Endothelial cell of umbilical vein (primary cell): ENCODE measurements at regions of chr21 and their contacts with region 1.

Region 1: GRCh38 chr21:21921421-21922232 is 923.4 kb downstream of the NCAM2 start:
- DNase-seq: no peak
- H3K4me3 ChIP-seq: no peak overlapping the region
- H3K27ac ChIP-seq: no peak overlapping the region
- H3K4me1 ChIP-seq: no peaks in the 10 kb centered on the region
- H3K27me3 ChIP-seq: no peaks in the 10 kb centered on the region
- CTCF ChIP-seq: peak in 1 of 2 donors; percentile 9
- POLR2A ChIP-seq: no peak

Region 2: GRCh38 chr21:21163904-21164303 is 757.7 kb before region 1 on chr21:
- CTCF ChIA-PET with region 1: no interaction called
- POLR2A ChIA-PET with region 1: no interaction called
- dilution Hi-C with region 1: no loop called
- intact Hi-C with region 1: loop called (anchors 5 kb)
- DNase-seq: peak; percentile 52
- H3K4me3 ChIP-seq: no peak overlapping the region
- H3K27ac ChIP-seq: no peak overlapping the region
- H3K4me1 ChIP-seq: no peaks in the 10 kb centered on the region
- H3K27me3 ChIP-seq: no peaks in the 10 kb centered on the region
- CTCF ChIP-seq: peak; percentile 44
- POLR2A ChIP-seq: no peak

Region 3: GRCh38 chr21:21232320-21232719 is 689.3 kb before region 1 on chr21:
- CTCF ChIA-PET with region 1: interaction called, 6 read pairs
- POLR2A ChIA-PET with region 1: no interaction called
- dilution Hi-C with region 1: no loop called
- intact Hi-C with region 1: loop called (anchors 5 kb)
- DNase-seq: peak; percentile 22
- H3K4me3 ChIP-seq: no peak overlapping the region
- H3K27ac ChIP-seq: no peak overlapping the region
- H3K4me1 ChIP-seq: no peaks in the 10 kb centered on the region
- H3K27me3 ChIP-seq: no peaks in the 10 kb centered on the region
- CTCF ChIP-seq: no peak
- POLR2A ChIP-seq: no peak

Region 4: GRCh38 chr21:21818898-21819297 is 102.7 kb before region 1 on chr21:
- CTCF ChIA-PET with region 1: no interaction called
- POLR2A ChIA-PET with region 1: no interaction called
- dilution Hi-C with region 1: no loop called
- intact Hi-C with region 1: no loop called
- DNase-seq: no peak
- H3K4me3 ChIP-seq: no peak overlapping the region
- H3K27ac ChIP-seq: no peak overlapping the region
- H3K4me1 ChIP-seq: no peaks in the 10 kb centered on the region
- H3K27me3 ChIP-seq: no peaks in the 10 kb centered on the region
- CTCF ChIP-seq: no peak
- POLR2A ChIP-seq: no peak

Region 5: DNA sequence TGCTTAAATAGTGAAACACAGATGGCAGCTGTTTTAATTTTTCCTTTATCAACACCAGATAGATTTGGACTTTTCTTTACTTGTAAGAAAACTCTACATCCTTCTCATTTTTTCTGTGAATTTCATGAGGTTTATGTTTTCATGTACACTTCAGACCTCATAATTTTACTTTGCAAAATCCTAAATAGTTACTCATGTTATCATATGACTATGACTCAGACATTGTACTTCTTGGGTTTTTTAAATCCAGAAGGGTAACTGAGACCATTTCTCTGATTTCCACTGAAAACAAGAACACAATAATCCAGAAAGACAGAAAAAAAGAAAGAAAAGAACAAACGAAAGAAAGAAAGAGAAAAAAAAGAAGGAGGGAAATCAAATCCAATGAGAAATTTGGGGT is 98.1 kb after region 1 on chr21:
- CTCF ChIA-PET with region 1: no interaction called
- POLR2A ChIA-PET with region 1: no interaction called
- dilution Hi-C with region 1: no loop called
- intact Hi-C with region 1: no loop called
- DNase-seq: no peak
- H3K4me3 ChIP-seq: no peak overlapping the region
- H3K27ac ChIP-seq: no peak overlapping the region
- H3K4me1 ChIP-seq: no peaks in the 10 kb centered on the region
- H3K27me3 ChIP-seq: no peaks in the 10 kb centered on the region
- CTCF ChIP-seq: no peak
- POLR2A ChIP-seq: no peak

Region 6: GRCh38 chr21:22288885-22289499 is 367.4 kb after region 1 on chr21:
- CTCF ChIA-PET with region 1: no interaction called
- POLR2A ChIA-PET with region 1: no interaction called
- dilution Hi-C with region 1: no loop called
- intact Hi-C with region 1: no loop called
- DNase-seq: no peak
- H3K4me3 ChIP-seq: no peak overlapping the region
- H3K27ac ChIP-seq: no peak overlapping the region
- H3K4me1 ChIP-seq: no peaks in the 10 kb centered on the region
- H3K27me3 ChIP-seq: no peaks in the 10 kb centered on the region
- CTCF ChIP-seq: no peak
- POLR2A ChIP-seq: no peak